Activated CD8-positive, alpha-beta T cell treated with anti-CD3 and anti-CD28 coated beads for 36 hours (primary cell): ENCODE measurements at regions of chr17 and their contacts with region 1.

Region 1: GRCh38 chr17:38557836-38558727 is 47.7 kb downstream of the SRCIN1 start:
- DNase-seq: peak; percentile 92
- ATAC-seq: peak; percentile 87
- H3K4me3 Mint-ChIP-seq: peak overlapping the region; percentile 75
- H3K27ac Mint-ChIP-seq: no peak overlapping the region
- H3K4me1 Mint-ChIP-seq: peaks cover 25% of the 10 kb centered on the region
- H3K27me3 Mint-ChIP-seq: peaks cover 30% of the 10 kb centered on the region
- CTCF ChIP-seq: peak; percentile 89

Region 2: GRCh38 chr17:38498186-38498752 is 59.8 kb before region 1 on chr17:
- CTCF ChIA-PET with region 1: no interaction called
- POLR2A ChIA-PET with region 1: no interaction called
- intact Hi-C with region 1: no loop called
- DNase-seq: no peak
- ATAC-seq: no peak
- H3K4me3 Mint-ChIP-seq: no peak overlapping the region
- H3K27ac Mint-ChIP-seq: no peak overlapping the region
- H3K4me1 Mint-ChIP-seq: no peaks in the 10 kb centered on the region
- H3K27me3 Mint-ChIP-seq: peaks cover 3% of the 10 kb centered on the region
- CTCF ChIP-seq: no peak

Region 3: DNA sequence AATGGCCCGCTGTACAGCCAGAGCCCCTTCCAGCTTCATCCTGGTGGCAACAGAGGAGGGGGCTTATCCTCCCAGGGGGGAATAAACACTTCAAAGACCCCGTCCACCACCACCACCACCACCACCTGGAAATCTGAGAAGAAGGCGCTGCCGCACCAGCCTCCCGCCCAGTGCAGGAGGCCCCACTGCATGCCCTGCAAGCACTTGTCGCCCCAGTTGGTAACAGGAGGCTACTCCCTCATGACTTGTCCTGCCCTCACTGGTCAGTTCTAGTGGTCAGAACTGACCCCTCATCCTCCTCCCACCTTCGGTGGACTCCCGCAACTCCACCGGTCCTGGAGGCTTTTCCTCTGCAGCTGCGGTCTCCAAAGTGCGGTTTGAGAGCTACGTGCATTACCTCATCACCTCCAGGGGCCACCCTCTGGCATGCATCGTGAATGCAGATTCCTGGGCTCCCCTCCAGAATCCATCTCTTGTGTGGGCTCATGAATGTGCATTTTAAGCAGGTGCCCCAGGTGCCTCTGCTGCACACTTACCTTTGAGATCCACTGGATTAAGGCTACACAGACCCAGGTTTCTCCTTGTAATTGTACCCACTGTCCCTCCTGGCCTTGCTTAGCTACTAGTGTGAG is 24.1 kb before region 1 on chr17:
- CTCF ChIA-PET with region 1: interaction called, 20 read pairs
- POLR2A ChIA-PET with region 1: no interaction called
- intact Hi-C with region 1: no loop called
- DNase-seq: no peak
- ATAC-seq: no peak
- H3K4me3 Mint-ChIP-seq: no peak overlapping the region
- H3K27ac Mint-ChIP-seq: no peak overlapping the region
- H3K4me1 Mint-ChIP-seq: no peaks in the 10 kb centered on the region
- H3K27me3 Mint-ChIP-seq: peaks cover 19% of the 10 kb centered on the region
- CTCF ChIP-seq: no peak

Region 4: GRCh38 chr17:38578229-38579082 is 20.4 kb after region 1 on chr17:
- CTCF ChIA-PET with region 1: interaction called, 241 read pairs
- POLR2A ChIA-PET with region 1: interaction called, 4 read pairs
- intact Hi-C with region 1: no loop called
- DNase-seq: no peak
- ATAC-seq: peak; percentile 12
- H3K4me3 Mint-ChIP-seq: no peak overlapping the region
- H3K27ac Mint-ChIP-seq: no peak overlapping the region
- H3K4me1 Mint-ChIP-seq: peaks cover 6% of the 10 kb centered on the region
- H3K27me3 Mint-ChIP-seq: peaks cover 71% of the 10 kb centered on the region
- CTCF ChIP-seq: no peak

Region 5: DNA sequence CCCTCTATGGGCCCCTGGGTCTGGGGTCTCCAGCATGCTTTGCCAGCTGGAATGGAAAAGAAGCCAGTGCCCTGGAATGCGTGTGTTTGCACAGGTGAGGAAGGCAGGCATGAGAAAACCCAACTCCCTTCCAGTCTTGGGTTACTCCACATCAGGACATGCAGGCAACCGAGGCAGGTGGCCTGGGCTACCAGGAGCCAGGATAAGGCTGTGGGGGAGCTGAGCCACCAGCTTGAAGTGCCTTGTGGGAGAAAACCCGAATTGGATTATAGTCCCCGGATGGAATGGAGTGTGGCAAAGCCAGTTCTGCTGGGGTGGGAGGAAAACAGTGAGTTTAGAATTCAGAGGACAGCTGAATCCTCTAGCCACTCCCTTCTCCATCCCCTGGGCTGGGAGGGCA is 40.5 kb after region 1 on chr17:
- CTCF ChIA-PET with region 1: interaction called, 47 read pairs
- POLR2A ChIA-PET with region 1: no interaction called
- intact Hi-C with region 1: no loop called
- DNase-seq: peak; percentile 63
- ATAC-seq: peak; percentile 74
- H3K4me3 Mint-ChIP-seq: no peak overlapping the region
- H3K27ac Mint-ChIP-seq: no peak overlapping the region
- H3K4me1 Mint-ChIP-seq: peaks cover 14% of the 10 kb centered on the region
- H3K27me3 Mint-ChIP-seq: peaks cover 72% of the 10 kb centered on the region
- CTCF ChIP-seq: no peak

Region 6: GRCh38 chr17:38660097-38661025 is 102.3 kb after region 1 on chr17:
- CTCF ChIA-PET with region 1: interaction called, 251 read pairs
- POLR2A ChIA-PET with region 1: no interaction called
- intact Hi-C with region 1: loop called (anchors 10 kb)
- DNase-seq: no peak
- ATAC-seq: no peak
- H3K4me3 Mint-ChIP-seq: no peak overlapping the region
- H3K27ac Mint-ChIP-seq: no peak overlapping the region
- H3K4me1 Mint-ChIP-seq: peaks cover 20% of the 10 kb centered on the region
- H3K27me3 Mint-ChIP-seq: peaks cover 10% of the 10 kb centered on the region
- CTCF ChIP-seq: no peak

Region 7: DNA sequence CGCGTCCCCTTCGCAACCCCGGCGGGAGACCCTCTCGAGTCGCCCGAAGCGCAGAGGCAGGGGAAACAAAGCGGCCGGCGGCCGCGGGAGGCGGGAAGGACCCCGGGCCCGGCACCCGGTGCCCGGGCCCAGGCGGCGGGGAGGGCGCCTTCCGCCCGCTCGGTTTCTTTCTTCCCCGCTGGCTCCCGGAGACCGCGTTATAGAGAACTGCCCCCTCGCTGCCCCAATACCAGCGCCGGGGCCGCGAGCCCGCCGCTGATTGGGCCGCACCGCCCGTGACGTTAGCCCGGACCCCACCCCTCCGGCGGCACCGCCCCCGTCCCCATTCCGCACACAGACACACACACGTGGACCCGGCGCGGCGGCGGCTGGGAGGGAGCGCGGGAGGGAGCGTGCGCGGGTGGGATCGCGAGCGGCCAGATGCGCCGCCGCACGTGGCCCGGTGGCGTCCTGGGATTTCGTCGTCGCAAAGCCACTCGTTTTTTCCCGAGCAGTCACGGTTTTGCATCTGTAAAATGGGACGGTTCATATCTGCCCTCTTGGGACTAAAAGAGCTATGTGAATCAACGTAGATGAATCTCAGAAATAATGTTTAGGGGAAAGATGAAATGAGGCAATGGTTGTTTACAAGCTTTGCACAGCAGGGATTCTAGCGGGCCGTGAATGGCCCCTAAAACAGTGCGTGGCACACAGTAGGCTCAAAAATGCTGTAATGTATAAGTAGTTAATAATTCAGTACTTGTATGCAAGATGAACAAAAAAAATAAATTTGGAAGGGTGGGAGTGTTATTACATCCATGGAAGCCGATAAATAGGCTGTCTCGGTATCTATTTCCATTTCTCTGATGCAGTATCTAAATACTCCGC is 116.9 kb after region 1 on chr17 and contains the start of gene EPOP:
- CTCF ChIA-PET with region 1: interaction called, 251 read pairs
- POLR2A ChIA-PET with region 1: interaction called, 3 read pairs
- intact Hi-C with region 1: no loop called
- DNase-seq: peak; percentile 93
- ATAC-seq: peak; percentile 77
- H3K4me3 Mint-ChIP-seq: peak within 1 kb of the TSS; percentile 76
- H3K27ac Mint-ChIP-seq: peak within 1 kb of the TSS; percentile 75
- H3K4me1 Mint-ChIP-seq: peaks cover 41% of the 10 kb centered on the region
- H3K27me3 Mint-ChIP-seq: peaks cover 15% of the 10 kb centered on the region
- CTCF ChIP-seq: no peak
- total RNA-seq, gene EPOP: 31.8 to 32.2 TPM

Region 8: DNA sequence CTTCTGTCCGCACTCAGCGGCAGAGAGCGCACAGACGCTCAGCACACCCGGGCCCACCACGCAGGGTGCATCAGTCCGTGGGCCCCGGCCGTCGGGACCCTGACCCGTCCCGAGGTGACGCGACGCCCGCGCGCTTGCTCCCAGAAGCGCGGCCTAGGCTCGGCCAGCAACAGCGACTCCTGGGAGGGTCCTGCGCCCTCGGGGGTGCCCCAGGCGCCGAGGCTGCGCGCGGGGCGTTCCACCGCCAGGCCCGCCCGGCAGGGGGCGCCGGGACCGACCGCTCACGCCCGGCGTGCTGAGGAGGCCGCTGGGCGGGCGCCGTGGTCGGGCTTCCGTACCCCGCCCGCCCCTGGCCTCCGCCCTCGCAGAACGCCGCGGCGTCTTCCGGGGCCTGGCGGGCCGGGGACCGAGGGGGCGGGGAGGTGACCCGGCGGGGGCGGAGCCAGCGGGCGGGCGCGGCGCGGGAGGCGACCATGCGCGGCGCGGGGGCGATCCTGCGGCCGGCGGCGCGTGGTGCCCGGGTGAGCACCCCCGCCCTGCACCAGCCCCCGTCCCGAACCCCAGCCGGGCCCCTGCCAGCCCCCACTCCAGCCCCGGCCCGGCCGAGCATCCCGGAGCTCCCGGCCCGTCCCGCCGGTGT is 171.9 kb after region 1 on chr17 and contains the start of gene CISD3:
- CTCF ChIA-PET with region 1: interaction called, 27 read pairs
- POLR2A ChIA-PET with region 1: interaction called, 4 read pairs
- intact Hi-C with region 1: no loop called
- DNase-seq: peak; percentile 86
- ATAC-seq: peak; percentile 70
- H3K4me3 Mint-ChIP-seq: peak within 1 kb of the TSS; percentile 89
- H3K27ac Mint-ChIP-seq: peak within 1 kb of the TSS; percentile 99
- H3K4me1 Mint-ChIP-seq: peaks cover 80% of the 10 kb centered on the region
- H3K27me3 Mint-ChIP-seq: no peaks in the 10 kb centered on the region
- CTCF ChIP-seq: peak; percentile 59
- total RNA-seq, gene CISD3: 43.2 to 44.2 TPM